Common myeloid progenitor, CD34-positive (primary cell): ENCODE measurements at regions of chr1 and their contacts with region 1.

Region 1: DNA sequence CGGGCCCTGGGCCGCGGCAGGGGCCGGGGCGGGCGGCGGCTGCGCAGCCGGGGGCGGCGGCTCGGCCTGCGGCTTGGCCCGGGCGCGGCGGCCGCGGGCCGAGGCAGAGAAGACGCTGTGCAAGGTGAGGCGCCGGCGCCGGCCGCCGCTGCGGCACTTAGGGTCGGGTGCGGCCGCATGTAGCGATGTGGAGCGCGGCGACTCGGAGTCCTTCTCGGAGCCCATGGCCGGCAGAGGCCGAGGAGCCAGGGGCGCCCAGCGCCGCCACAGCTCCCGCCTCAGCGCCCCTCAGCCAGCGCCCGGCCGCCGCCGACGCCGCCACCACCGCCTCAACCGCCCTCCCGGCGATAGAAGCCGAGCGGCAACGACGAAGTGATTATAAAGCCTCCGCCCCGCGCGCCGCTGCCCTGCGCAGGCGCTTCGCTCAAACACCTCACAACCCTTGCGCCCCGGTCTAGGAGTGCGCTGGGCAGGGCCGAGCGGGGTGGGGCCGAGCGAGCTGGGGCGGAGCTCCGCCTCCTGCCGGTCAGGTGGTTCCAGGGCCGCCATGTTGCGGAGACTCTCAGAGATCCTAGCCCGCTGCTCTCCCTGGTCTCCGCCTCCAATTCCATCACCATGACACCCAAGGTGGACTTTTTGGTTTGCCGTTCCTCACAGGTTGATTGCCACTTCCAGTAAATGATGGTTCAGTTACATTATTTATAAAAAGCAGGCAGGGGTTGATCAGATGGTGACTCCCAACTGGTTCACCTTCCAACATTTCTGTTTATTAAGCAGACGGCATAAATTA is at the start of gene RNF19B:
- DNase-seq: peak; percentile 94 to 97 (median 96)
- H3K4me3 ChIP-seq: peak within 1 kb of the TSS; percentile 59 to 89 (median 79)
- H3K27ac ChIP-seq: peak within 1 kb of the TSS in 1 of 2 experiments; percentile 73
- H3K4me1 ChIP-seq: peaks cover 7 to 30% (median 24%) of the 10 kb centered on the region in 4 experiments
- H3K27me3 ChIP-seq: no peaks in the 10 kb centered on the region

Region 2: GRCh38 chr1:32917546-32917945 is 47.1 kb before region 1 on chr1:
- CTCF ChIA-PET with region 1: no interaction called
- POLR2A ChIA-PET with region 1: no interaction called
- DNase-seq: peak in 2 of 3 donors; percentile 39 to 40
- H3K4me3 ChIP-seq: no peak overlapping the region
- H3K27ac ChIP-seq: no peak overlapping the region
- H3K4me1 ChIP-seq: peaks cover 0 to 6% (median 2%) of the 10 kb centered on the region in 4 experiments
- H3K27me3 ChIP-seq: peaks cover 3 to 39% (median 18%) of the 10 kb centered on the region in 5 experiments

Region 3: DNA sequence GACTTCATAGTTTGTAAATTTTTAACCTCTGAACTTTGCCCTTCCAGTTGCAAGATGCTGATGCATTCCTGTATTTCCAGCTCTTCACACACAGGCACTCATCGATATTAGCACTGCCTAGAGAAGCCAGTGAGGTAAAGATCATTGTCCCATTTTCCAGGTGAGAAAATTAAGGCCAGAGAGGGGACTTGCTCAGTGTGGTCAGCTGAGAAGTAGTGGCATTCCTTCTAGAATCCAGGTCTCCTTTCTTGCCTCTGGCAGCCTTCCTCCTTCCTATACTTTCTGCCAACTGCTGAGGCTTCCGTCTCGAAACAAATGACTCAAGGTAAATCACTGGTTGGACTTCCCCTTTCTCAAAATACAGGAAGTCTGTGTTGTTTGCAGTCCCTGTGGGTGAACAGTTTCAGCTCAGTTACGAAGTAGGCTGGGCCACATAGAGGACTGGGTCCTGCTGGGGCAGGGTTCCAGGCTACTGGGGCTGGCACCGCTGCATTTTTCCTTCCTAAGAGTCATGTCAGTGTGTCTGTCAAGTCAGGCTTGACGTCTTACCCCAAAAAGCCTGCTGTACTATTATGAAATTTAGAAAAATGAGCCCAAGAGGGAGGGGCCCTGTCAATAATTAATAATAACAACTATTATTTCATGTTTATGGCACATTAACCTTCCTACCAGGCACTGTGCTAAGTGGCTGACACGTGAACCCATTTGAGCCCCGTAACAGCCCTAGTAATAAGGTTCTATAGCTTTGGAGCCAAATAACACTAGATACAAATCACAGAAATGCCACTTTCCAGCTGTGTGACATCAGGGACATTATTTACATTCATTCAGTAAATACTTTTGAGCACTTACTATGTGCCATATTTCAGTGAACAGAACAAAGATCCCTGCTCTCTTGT is 16.6 kb after region 1 on chr1:
- CTCF ChIA-PET with region 1: interaction called, 12 read pairs
- POLR2A ChIA-PET with region 1: interaction called, 13 read pairs
- DNase-seq: peak; percentile 84 to 96 (median 93)
- H3K4me3 ChIP-seq: peak overlapping the region in 6 of 7 experiments; percentile 8 to 55 (median 43)
- H3K27ac ChIP-seq: peak overlapping the region; percentile 40 to 84
- H3K4me1 ChIP-seq: peaks cover 17 to 52% (median 27%) of the 10 kb centered on the region in 4 experiments
- H3K27me3 ChIP-seq: no peaks in the 10 kb centered on the region